Heart right ventricle (tissue), 16 donors: ENCODE measurements at regions of chr3 and their contacts with region 1.

Region 1: DNA sequence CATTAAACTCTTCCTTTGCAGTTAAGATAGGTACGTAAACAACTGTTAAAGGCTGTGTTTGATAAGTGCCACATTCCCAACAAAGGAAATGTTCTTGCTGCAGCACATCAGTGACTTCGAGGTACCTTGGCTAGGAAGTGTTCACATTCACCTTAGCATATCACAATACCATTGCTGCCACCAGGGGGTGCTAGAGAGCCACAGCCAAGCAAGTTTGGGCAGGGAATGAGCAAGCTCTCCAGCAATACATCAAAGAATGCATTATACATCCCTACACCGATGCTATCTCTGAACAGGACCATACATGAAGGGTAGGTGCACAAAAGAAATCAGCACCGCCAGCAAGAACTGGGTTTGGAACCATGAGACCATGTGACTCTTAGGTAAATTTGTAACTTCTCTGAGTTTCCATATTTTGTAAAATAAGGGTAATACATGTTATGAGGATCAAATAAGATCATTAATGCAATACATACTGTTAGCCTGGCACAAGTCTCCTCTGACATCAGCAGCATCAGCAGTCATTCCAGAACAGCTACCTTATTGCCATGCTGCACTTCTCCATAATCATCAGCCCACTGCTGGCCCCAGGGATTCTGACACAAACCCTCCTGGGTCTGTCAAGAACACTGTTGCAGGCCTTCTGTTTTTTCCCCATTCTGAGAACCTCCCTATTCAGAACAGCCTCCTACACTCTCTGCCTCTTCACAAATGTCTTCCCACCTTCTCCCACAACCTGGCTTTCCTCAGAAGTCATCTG is 37.6 kb downstream of the RYK start:
- DNase-seq: peak; percentile 75 to 78
- ATAC-seq: peak; percentile 77 to 93 (median 84)
- H3K4me3 ChIP-seq: no peak overlapping the region
- H3K27ac ChIP-seq: no peak overlapping the region
- H3K4me1 ChIP-seq: peaks cover 0 to 46% (median 14%) of the 10 kb centered on the region in 9 donors
- H3K27me3 ChIP-seq: no peaks in the 10 kb centered on the region
- CTCF ChIP-seq: peak; percentile 88 to 99 (median 98)

Region 2: DNA sequence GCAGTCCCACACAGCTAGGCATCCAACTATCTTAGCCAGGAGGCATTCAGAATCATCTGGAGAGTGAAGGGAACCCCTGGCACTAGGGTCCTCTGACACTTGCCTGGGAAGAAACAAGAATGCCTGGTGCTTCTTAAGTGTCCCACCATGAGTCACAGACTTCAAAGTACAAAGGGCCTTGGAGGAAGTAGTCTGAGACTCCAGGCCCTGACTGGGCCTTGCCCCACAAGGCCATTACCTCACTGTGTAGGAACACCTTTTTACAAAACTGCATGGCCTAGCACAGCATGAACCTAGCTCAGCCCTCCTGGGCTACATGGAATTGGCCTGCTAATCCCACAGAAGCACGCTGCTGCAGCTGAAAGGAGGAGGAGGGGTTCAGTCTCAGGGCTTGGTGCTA is 78.8 kb before region 1 on chr3:
- intact Hi-C with region 1: no loop called
- DNase-seq: no peak
- ATAC-seq: no peak
- H3K4me3 ChIP-seq: no peak overlapping the region
- H3K27ac ChIP-seq: no peak overlapping the region
- H3K4me1 ChIP-seq: no peaks in the 10 kb centered on the region
- H3K27me3 ChIP-seq: no peaks in the 10 kb centered on the region
- CTCF ChIP-seq: no peak

Region 3: GRCh38 chr3:134250717-134251220 is 37.7 kb after region 1 on chr3 and contains the start of gene RYK:
- intact Hi-C with region 1: loop called in 1 of 10 experiments (anchors 5 kb)
- DNase-seq: peak; percentile 74 to 86
- ATAC-seq: peak; percentile 92 to 96 (median 95)
- H3K4me3 ChIP-seq: peak within 1 kb of the TSS; percentile 64 to 84 (median 74)
- H3K27ac ChIP-seq: peak within 1 kb of the TSS; percentile 40 to 96 (median 90)
- H3K4me1 ChIP-seq: peaks cover 3 to 62% (median 41%) of the 10 kb centered on the region in 9 donors
- H3K27me3 ChIP-seq: no peaks in the 10 kb centered on the region
- CTCF ChIP-seq: no peak
- total RNA-seq, gene RYK: 33.8 to 45.8 (median 37.5) TPM

Region 4: GRCh38 chr3:134337511-134338195 is 124.6 kb after region 1 on chr3:
- intact Hi-C with region 1: loop called in 1 of 10 experiments (anchors 1 kb)
- DNase-seq: no peak
- ATAC-seq: no peak
- H3K4me3 ChIP-seq: no peak overlapping the region
- H3K27ac ChIP-seq: no peak overlapping the region
- H3K4me1 ChIP-seq: peaks cover 7 to 44% (median 28%) of the 10 kb centered on the region in 9 donors
- H3K27me3 ChIP-seq: no peaks in the 10 kb centered on the region
- CTCF ChIP-seq: no peak

Region 5: DNA sequence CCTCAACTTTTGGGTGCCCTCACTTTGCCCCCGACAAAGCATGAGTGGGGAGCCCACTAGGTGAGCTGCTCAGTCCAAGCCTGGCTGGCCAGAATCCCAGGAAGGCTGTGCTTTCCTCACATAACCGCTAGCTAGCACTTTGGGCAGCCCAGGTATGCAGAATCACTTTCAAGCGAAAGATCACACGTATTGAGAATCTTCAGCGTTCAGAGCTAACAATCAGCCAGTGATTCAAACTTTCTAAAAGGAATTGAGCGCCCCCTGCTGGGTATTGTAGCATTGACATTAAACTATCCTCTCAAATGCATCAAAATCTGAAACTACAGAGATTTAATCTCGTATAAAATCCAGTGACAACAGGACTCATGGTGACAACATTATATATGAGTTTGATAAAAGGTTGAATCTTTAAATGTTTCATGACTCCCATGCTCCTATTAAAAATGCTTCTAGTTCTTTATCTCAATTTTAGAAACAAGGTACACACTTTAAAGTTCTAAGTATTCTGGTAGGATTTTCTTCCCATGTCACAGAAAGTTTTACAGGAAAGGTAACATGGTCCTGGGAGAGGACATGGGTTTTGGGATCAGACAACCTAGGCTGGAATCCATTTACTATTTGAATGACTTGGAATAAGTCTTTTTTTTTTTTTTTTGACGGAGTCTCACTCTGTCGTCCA is 260.9 kb after region 1 on chr3:
- intact Hi-C with region 1: loop called in 8 of 10 experiments (anchors 5 to 10 kb)
- DNase-seq: peak in 1 of 2 donors; percentile 86
- ATAC-seq: peak in 6 of 8 donors; percentile 23 to 66 (median 58)
- H3K4me3 ChIP-seq: no peak overlapping the region
- H3K27ac ChIP-seq: no peak overlapping the region
- H3K4me1 ChIP-seq: peaks cover 0 to 37% (median 20%) of the 10 kb centered on the region in 9 donors
- H3K27me3 ChIP-seq: no peaks in the 10 kb centered on the region
- CTCF ChIP-seq: peak; percentile 77 to 90 (median 82)